ENCODE measurements at regions of chr5 and their contacts with region 1.

Region 1: GRCh38 chr5:149128023-149128875 is 13.0 kb upstream of the ABLIM3 start:
- DNase-seq: peak; percentile 80
- H3K4me3 Mint-ChIP-seq: peak overlapping the region; percentile 67
- H3K27ac Mint-ChIP-seq: peak overlapping the region; percentile 84
- H3K4me1 Mint-ChIP-seq: peaks cover 73% of the 10 kb centered on the region
- H3K27me3 Mint-ChIP-seq: no peaks in the 10 kb centered on the region
- CTCF ChIP-seq: peak; percentile 87

Region 2: GRCh38 chr5:148998174-148998797 is 130.0 kb before region 1 on chr5:
- CTCF ChIA-PET with region 1: interaction called, 14 read pairs
- POLR2A ChIA-PET with region 1: no interaction called
- intact Hi-C with region 1: no loop called
- DNase-seq: peak; percentile 93
- H3K4me3 Mint-ChIP-seq: no peak overlapping the region
- H3K27ac Mint-ChIP-seq: peak overlapping the region; percentile 73
- H3K4me1 Mint-ChIP-seq: peaks cover 60% of the 10 kb centered on the region
- H3K27me3 Mint-ChIP-seq: no peaks in the 10 kb centered on the region
- CTCF ChIP-seq: peak; percentile 79

Region 3: GRCh38 chr5:149108651-149109280 is 19.5 kb before region 1 on chr5:
- CTCF ChIA-PET with region 1: interaction called, 100 read pairs
- POLR2A ChIA-PET with region 1: interaction called, 3 read pairs
- intact Hi-C with region 1: no loop called
- DNase-seq: no peak
- H3K4me3 Mint-ChIP-seq: no peak overlapping the region
- H3K27ac Mint-ChIP-seq: no peak overlapping the region
- H3K4me1 Mint-ChIP-seq: peaks cover 18% of the 10 kb centered on the region
- H3K27me3 Mint-ChIP-seq: no peaks in the 10 kb centered on the region
- CTCF ChIP-seq: no peak

Region 4: DNA sequence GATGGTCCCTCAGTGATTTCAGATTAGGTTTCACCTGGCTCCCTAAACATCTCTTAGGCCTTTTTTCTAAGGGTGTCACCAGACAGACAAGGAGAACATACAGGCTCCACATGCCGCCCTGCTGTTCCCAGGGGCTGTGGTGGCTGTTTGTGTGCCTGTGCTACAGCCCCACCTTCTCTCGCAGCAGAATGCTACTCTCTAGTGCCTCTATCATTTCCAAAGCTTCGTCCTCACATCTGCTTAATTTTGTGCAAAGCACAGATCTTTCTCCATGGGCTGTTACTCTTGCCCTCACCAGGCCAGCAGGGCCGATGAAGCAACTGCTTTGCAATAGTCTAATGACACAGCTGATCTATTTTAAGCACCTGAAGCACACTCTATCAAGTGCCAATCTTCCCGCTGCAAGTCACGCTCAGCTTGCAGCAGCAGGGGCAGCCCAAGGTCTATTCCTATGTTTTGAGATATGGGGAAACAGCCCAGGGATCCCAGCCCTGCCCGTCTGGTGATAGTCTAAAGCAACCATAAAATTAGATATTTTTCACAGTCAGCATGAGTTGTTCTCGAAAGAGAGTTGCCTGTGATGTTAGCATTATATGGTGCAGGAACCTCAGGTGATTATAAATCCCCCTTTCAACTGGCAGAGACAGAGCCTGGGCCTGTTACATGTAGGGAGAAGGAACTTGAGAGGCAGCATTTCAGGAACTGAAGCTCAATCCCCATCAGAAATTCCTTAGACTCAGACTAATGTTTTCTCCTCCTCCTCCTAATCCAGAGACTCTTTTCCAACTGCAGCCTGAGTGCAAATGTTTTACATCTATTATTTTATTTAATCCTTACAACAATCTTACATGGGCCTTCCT is 25.7 kb after region 1 on chr5:
- CTCF ChIA-PET with region 1: interaction called, 49 read pairs
- POLR2A ChIA-PET with region 1: interaction called, 71 read pairs
- intact Hi-C with region 1: loop called (anchors 1 kb)
- DNase-seq: peak; percentile 87
- H3K4me3 Mint-ChIP-seq: peak overlapping the region; percentile 3
- H3K27ac Mint-ChIP-seq: peak overlapping the region; percentile 81
- H3K4me1 Mint-ChIP-seq: peaks cover 61% of the 10 kb centered on the region
- H3K27me3 Mint-ChIP-seq: no peaks in the 10 kb centered on the region
- CTCF ChIP-seq: no peak

Region 5: DNA sequence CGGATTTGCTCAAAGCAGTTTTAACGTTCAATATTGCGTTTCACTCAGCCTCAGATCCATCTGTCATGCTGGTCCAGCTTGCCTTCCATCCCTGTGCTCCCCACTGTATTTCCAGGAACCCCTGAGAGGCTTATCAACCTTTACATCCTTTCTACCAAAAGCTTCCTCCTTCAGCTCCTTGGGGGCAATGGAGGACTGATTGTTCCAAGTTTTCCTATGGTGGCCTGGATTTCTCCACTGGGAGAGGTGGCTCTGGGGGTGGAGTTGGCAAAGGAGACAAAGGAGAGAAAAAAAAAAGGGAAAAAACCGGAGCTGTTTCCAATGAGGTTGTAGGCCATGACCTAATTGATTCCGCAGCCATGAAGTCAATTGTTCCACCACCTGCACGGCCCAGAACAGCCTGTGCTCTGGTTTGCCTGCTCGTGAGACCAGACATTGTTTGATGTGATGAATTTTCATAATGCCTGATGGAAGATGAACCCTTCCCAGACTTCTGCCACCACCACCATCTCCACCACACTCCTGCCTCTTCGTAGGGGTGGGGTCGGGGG is 67.2 kb after region 1 on chr5:
- CTCF ChIA-PET with region 1: interaction called, 9 read pairs
- POLR2A ChIA-PET with region 1: interaction called, 4 read pairs
- intact Hi-C with region 1: loop called (anchors 2 kb)
- DNase-seq: no peak
- H3K4me3 Mint-ChIP-seq: no peak overlapping the region
- H3K27ac Mint-ChIP-seq: no peak overlapping the region
- H3K4me1 Mint-ChIP-seq: peaks cover 14% of the 10 kb centered on the region
- H3K27me3 Mint-ChIP-seq: no peaks in the 10 kb centered on the region
- CTCF ChIP-seq: no peak

Region 6: DNA sequence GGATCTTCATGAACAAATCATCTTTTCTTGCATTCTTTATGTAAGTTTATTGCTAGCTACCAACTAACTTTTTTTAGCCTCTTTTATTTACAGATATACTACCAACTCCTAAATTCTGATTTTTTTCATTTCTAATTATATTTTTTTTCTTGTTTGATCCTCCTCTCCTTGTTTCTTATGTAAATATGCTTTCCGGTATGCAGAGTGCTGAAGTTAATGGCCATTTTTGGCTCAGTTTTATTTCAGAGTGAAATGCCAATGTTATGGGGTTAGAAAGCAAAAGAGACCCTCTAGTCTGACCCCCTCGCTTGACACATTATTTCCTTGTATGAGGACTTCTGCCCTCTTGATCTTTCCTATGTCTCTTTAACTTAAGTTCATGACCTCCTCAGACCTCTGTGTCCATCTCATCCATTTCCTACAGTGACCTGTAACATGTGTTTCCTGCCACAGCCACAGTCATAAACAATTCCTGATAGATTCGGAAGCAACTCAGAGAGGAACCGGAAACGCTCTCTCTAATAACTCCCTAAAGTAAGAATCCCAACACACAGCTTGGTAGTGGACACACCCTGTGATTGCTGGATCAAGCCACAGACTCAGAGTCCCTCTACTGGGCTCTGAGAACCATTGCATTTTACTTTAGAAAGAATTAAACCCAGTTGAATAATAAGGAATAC is 100.5 kb after region 1 on chr5:
- CTCF ChIA-PET with region 1: interaction called, 426 read pairs
- POLR2A ChIA-PET with region 1: interaction called, 17 read pairs
- intact Hi-C with region 1: loop called (anchors 1 kb)
- DNase-seq: peak; percentile 84
- H3K4me3 Mint-ChIP-seq: peak overlapping the region; percentile 0
- H3K27ac Mint-ChIP-seq: peak overlapping the region; percentile 73
- H3K4me1 Mint-ChIP-seq: peaks cover 6% of the 10 kb centered on the region
- H3K27me3 Mint-ChIP-seq: no peaks in the 10 kb centered on the region
- CTCF ChIP-seq: peak; percentile 83